Sigmoid colon (tissue), 7 donors: ENCODE measurements at regions of chr15 and their contacts with region 1.

Region 1: DNA sequence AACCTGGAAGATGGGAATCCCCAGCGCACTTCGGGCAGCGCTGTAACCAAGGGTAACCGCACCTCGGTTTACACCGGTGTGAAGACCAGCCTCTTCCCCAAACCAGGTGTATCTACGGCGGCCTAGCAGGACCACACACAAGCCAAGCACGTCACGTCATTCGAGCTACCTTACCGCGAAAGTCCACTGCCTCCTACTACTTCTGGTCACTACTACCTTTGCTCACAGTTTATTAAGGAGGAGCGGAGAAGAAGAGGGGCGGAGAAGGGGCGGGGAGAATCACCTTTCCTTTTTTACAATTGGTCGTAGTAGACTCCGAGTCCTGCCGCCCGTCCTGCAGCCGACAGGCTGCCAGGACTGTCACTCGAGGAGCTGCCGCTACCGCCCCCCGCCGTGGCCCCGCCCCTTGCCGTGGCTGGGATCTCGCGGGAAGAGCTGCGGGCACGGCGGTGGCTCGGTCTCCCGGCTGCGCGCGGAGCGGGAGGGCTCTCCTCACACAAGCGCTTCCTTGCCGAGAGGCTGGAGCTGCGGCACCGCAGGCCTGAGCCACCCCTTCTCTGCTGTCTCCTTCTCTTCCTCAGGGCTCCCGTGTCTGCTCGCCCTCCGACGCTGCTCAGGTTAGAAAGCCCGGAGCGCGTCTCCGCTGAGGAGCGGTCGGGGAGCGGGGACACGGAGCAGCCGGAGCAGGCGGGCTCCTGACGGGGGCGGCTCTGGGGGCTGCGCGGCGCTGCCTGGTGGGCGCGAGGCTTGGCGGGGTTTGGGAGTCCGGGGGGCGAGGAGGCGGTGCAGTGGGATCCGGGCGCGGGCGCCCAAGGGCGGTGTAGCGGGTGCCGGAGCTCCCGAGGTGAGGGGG is at the start of gene GLCE:
- DNase-seq: peak; percentile 97
- H3K4me3 ChIP-seq: peak within 1 kb of the TSS; percentile 69 to 92 (median 82)
- H3K27ac ChIP-seq: peak within 1 kb of the TSS; percentile 76 to 88 (median 84)
- H3K4me1 ChIP-seq: peaks cover 0 to 10% (median 6%) of the 10 kb centered on the region in 4 donors
- H3K27me3 ChIP-seq: no peaks in the 10 kb centered on the region
- CTCF ChIP-seq: no peak
- EP300 ChIP-seq: no peak
- POLR2A ChIP-seq: peak; percentile 74 to 84
- total RNA-seq, gene GLCE: 10.3 to 19.1 (median 12.7) TPM

Region 2: DNA sequence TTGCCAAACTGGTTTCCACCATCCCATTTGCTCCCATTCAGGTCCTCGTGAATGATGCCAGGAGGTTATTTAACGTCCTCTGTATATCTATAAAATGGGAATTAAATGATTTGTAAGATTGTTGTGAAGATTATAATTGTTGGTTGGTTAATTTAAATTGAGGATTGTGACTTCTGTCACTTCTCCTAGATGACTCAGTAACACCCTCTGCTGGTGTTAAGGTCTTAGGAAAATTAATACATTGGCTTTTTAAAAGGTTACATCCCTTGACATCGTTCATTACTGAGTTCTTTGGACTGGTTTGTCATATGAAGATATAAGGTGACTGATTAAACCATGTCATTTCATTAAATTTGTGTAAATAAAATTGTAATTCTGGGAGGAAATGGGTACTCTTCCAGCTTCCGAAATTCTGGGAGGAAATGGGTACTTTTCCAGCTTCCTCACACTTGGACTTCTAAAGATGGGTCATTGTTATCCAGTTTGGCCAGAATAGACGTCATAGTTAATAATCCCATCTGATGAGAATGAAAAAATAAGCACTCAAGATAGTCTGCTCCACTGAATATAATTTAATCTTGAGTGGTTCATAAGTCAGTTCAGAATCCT is 105.1 kb after region 1 on chr15:
- intact Hi-C with region 1: loop called (anchors 5 kb)
- DNase-seq: no peak
- H3K4me3 ChIP-seq: no peak overlapping the region
- H3K27ac ChIP-seq: no peak overlapping the region
- H3K4me1 ChIP-seq: no peaks in the 10 kb centered on the region
- H3K27me3 ChIP-seq: no peaks in the 10 kb centered on the region
- CTCF ChIP-seq: peak; percentile 11 to 51 (median 40)
- EP300 ChIP-seq: no peak
- POLR2A ChIP-seq: no peak

Region 3: DNA sequence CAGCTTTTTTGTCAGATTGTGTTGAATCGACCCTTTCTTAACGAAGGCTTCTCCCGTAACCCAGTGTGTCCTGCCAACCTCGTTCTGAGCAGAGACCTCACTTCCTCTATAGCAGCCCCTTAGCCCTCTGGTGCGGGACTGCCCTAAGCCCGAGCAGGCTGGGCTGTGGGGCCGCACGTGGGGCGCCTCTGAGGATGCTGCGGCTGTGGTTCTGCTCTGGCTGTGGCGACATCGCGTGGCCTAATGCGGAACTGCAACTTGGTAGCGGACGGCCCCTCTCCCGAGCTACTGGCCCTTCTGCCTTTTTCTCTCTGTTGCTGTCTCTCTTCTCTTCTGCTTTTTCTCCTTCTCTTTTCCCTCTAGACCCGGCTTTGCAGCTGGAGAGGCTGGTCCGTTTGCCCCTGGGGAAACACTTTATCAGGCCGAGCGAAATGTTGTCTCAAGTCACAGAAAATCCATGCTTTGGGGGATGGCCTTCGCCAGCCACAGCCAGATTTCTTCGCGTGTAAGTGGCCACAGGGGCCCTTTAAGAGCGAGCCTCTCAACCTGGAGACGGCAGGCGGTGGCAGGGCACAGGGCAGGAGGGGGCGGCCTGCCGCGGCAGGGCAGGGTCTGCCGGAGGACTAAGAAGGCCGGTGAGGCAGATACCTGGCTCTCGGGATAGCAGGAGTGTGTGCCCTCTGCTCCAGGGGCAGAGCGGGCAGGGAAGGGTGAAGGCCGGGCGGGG is 234.4 kb after region 1 on chr15:
- intact Hi-C with region 1: loop called (anchors 10 kb)
- DNase-seq: peak; percentile 87
- H3K4me3 ChIP-seq: no peak overlapping the region
- H3K27ac ChIP-seq: no peak overlapping the region
- H3K4me1 ChIP-seq: peaks cover 0 to 7% (median 5%) of the 10 kb centered on the region in 4 donors
- H3K27me3 ChIP-seq: no peaks in the 10 kb centered on the region
- CTCF ChIP-seq: peak; percentile 60 to 94 (median 84)
- EP300 ChIP-seq: no peak
- POLR2A ChIP-seq: no peak